H1 (cell line): ENCODE measurements at regions of chr2 and their contacts with region 1.

Region 1: DNA sequence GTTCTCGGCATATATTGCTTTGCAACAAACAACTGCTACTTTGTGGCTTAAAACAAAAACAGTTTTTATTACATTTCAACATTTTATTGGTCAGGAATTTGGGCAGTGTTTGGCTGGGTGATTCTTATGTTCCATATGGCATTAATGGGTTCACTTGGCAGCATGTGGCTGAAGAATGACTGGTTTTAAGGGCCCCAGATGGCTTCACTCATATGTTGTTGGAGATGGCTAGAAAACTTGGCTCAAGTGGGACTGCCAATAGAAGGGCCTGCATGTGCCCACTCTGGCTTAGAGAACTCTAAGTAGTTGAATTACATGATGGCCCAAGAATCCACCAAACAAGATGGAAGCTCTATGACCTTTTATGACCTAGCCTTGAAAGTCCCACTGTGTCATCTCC is 86.1 kb downstream of the FASTKD2 start:
- DNase-seq: no peak
- H3K4me3 ChIP-seq: no peak overlapping the region
- H3K27ac ChIP-seq: no peak overlapping the region
- H3K4me1 ChIP-seq: no peaks in the 10 kb centered on the region
- H3K27me3 ChIP-seq: no peaks in the 10 kb centered on the region
- CTCF ChIP-seq: no peak
- EP300 ChIP-seq: no peak
- POLR2A ChIP-seq: no peak
- RAD21 ChIP-seq: no peak

Region 2: GRCh38 chr2:206840999-206841398 is 10.5 kb before region 1 on chr2:
- CTCF ChIA-PET with region 1: interaction called, 13 read pairs
- POLR2A ChIA-PET with region 1: no interaction called
- DNase-seq: no peak
- H3K4me3 ChIP-seq: no peak overlapping the region
- H3K27ac ChIP-seq: no peak overlapping the region
- H3K4me1 ChIP-seq: no peaks in the 10 kb centered on the region
- H3K27me3 ChIP-seq: no peaks in the 10 kb centered on the region
- CTCF ChIP-seq: peak in 2 of 3 experiments; percentile 45 to 70; a peak in 3 of 4 replicates
- EP300 ChIP-seq: no peak
- POLR2A ChIP-seq: no peak
- RAD21 ChIP-seq: peak; percentile 57 to 69

Region 3: DNA sequence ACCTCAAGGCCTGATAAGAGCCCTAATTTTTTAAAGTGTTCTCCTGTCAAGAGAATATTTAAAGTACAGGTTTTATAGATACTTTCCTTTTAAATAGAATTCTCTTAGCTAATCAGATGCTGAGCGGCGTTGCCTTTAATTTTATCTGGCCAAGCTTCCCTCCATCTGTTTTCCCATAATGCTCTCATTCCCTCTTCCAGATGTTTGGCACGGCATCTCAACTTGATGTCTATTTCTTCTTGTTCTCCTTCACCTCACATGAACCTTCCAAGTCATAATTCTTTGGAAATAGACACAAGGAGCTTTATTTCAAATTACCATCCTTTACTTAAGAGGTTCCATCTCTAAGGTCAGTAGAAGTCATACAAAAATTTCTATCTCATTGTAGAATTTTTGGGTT is 11.7 kb after region 1 on chr2:
- CTCF ChIA-PET with region 1: no interaction called
- POLR2A ChIA-PET with region 1: no interaction called
- DNase-seq: no peak
- H3K4me3 ChIP-seq: no peak overlapping the region
- H3K27ac ChIP-seq: no peak overlapping the region
- H3K4me1 ChIP-seq: peaks cover 0 to 8% (median 4%) of the 10 kb centered on the region in 4 experiments; a peak in 4 of 7 replicates
- H3K27me3 ChIP-seq: no peaks in the 10 kb centered on the region
- CTCF ChIP-seq: no peak
- EP300 ChIP-seq: no peak
- POLR2A ChIP-seq: no peak
- RAD21 ChIP-seq: no peak

Region 4: GRCh38 chr2:207188626-207189419 is 337.3 kb after region 1 on chr2:
- CTCF ChIA-PET with region 1: no interaction called
- POLR2A ChIA-PET with region 1: no interaction called
- DNase-seq: no peak
- H3K4me3 ChIP-seq: no peak overlapping the region
- H3K27ac ChIP-seq: no peak overlapping the region
- H3K4me1 ChIP-seq: no peaks in the 10 kb centered on the region
- H3K27me3 ChIP-seq: no peaks in the 10 kb centered on the region
- CTCF ChIP-seq: no peak
- EP300 ChIP-seq: no peak
- POLR2A ChIP-seq: no peak
- RAD21 ChIP-seq: no peak